Colonic mucosa (tissue), 4 donors: ENCODE measurements at regions of chr2 and their contacts with region 1.

Region 1: DNA sequence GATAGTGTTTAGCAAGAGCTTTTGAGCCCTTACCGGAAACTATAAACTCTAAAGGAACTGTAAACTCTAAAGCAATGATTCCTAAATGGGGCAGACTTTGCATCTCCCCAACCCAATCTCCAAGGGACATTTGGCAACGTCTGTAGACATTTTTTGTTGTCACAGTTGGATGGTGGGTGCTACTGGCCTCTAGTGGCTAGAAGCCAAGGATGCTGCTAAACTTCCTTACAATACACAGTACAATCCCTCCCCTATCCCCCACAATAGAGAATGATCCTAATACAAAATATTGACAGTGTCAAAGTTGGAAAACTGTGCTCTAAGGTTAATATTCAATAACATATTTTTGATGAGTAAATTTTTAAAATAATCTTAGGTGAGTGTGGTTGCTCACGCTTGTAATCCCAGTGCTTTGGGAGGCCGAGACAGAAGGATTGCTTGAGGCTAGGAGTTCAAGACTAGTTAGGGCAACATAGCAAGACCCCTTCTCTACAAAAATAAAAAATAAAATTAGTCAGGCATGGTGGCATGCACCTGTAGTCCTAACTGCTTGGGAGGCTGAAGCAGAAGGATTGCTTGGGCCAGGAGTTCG is 66.7 kb downstream of the PTPN4 start:
- DNase-seq: no peak
- H3K4me3 ChIP-seq: no peak overlapping the region
- H3K27ac ChIP-seq: no peak overlapping the region
- H3K4me1 ChIP-seq: no peaks in the 10 kb centered on the region
- H3K27me3 ChIP-seq: no peaks in the 10 kb centered on the region
- CTCF ChIP-seq: peak; percentile 50

Region 2: DNA sequence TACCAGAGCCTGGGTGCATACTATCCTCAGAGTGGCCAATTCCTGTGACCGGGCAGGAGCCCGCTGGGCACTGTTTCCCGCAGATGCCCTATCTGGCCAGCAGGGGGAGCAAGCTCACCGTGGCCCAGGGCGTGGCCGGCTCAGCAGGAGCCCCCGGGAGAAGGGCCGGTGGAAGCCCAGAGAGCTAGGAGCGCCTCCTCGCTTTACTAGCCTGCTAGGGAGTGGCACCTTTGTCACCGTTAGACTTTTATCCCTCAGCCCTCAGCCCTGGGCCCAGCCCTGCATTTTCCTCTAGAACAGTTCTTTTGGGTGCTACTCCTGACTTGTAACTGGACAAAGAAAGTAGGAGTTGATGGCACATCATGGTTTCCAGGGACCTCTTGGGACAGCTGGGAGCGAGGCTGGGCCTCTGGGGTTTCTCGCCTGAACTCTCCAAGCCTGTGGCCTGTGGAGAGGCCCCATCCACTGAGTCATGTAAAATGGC is 123.5 kb before region 1 on chr2:
- intact Hi-C with region 1: loop called (anchors 5 kb)
- DNase-seq: peak; percentile 62
- H3K4me3 ChIP-seq: no peak overlapping the region
- H3K27ac ChIP-seq: no peak overlapping the region
- H3K4me1 ChIP-seq: no peaks in the 10 kb centered on the region
- H3K27me3 ChIP-seq: no peaks in the 10 kb centered on the region
- CTCF ChIP-seq: peak; percentile 95

Region 3: DNA sequence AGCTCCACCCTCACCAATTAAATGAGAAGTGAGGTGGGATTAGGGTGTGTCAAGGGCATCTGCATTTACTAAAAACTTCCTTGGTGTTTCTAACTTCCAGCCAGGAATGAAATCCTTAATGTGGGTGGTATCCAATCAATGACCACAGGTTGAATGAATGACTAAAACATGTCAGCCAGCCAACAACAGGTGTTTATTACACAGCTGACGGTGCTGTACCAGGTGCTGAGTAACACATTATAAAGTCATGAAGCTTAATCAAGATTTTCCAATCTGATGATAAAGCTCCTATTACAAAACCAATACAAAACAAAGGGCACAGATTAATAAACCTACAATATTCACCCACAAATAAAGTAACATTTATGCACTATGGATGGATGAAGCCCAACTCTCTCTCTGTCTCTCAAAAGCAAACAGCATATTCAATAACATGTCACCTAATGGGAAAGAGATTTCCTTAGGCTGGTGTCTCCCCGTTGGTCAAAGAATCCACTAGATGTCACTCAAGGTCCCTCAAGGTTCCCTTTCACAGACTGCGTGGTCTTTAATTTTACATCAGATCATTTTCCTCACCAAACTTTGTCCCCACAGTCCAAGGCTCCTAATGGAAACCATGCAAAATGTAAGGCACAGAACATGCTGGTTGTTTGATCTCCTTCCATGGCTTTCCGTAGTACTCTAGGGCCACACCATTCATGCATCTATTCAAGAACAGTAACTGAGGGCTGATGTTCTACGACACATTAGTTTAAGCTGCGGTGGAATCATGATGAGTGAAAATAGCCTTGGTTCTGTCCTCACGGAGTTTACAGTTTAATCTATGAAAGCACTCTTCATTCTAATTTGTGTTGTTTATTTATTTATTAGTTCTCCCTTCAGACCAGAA is 73.2 kb before region 1 on chr2:
- intact Hi-C with region 1: loop called (anchors 5 kb)
- DNase-seq: peak; percentile 27
- H3K4me3 ChIP-seq: no peak overlapping the region
- H3K27ac ChIP-seq: no peak overlapping the region
- H3K4me1 ChIP-seq: no peaks in the 10 kb centered on the region
- H3K27me3 ChIP-seq: no peaks in the 10 kb centered on the region
- CTCF ChIP-seq: peak; percentile 66

Region 4: GRCh38 chr2:120174963-120175581 is 348.6 kb after region 1 on chr2:
- intact Hi-C with region 1: loop called (anchors 5 kb)
- DNase-seq: peak; percentile 30
- H3K4me3 ChIP-seq: no peak overlapping the region
- H3K27ac ChIP-seq: no peak overlapping the region
- H3K4me1 ChIP-seq: no peaks in the 10 kb centered on the region
- H3K27me3 ChIP-seq: no peaks in the 10 kb centered on the region
- CTCF ChIP-seq: peak; percentile 66